Endothelial cell of umbilical vein (primary cell): ENCODE measurements at regions of chr6 and their contacts with region 1.

Region 1: DNA sequence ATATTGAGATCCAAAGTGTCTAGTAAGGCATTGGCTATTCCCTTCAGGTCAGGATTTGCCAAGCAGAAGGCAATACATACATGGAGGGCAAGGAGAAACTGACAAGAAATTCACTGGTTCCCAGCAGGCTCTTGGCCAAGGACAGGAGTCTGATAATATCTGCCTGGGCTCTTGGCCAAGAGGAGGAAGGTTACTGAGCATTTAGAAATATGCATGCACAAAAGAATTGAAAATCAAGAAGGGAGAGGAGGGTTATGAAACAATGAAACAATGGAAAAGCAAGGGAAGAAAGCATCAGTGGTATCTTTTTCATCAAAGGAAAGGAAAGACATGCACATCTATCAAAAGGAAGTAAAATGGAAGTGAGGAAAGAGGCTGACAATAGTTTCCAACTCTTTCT is 42.4 kb downstream of the ARHGAP18 start:
- DNase-seq: peak; percentile 92
- H3K4me3 ChIP-seq: no peak overlapping the region
- H3K27ac ChIP-seq: peak overlapping the region; percentile 35
- H3K4me1 ChIP-seq: peaks cover 62% of the 10 kb centered on the region
- H3K27me3 ChIP-seq: no peaks in the 10 kb centered on the region
- CTCF ChIP-seq: no peak
- POLR2A ChIP-seq: no peak

Region 2: DNA sequence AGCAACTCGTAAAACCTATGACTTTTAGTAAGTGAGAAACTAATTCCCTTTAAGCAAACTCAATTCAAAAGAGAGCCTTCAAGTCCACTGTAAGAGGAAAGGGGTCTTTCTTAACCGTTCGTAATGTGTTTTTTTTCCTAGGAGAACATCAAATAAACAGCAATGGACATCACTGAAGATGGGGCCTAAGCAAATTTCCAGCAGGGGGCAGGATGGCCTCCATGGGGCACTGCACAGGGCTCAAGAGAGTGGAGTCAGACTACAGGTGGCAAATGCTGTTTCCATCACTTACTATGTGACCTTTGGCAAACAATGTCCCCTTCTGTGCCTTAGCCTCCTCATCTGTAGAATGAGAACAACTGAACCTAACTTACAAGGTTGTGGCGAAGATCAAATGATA is 46.4 kb before region 1 on chr6:
- CTCF ChIA-PET with region 1: no interaction called
- POLR2A ChIA-PET with region 1: no interaction called
- dilution Hi-C with region 1: no loop called
- intact Hi-C with region 1: loop called (anchors 2 kb)
- DNase-seq: no peak
- H3K4me3 ChIP-seq: no peak overlapping the region
- H3K27ac ChIP-seq: no peak overlapping the region
- H3K4me1 ChIP-seq: peaks cover 27% of the 10 kb centered on the region
- H3K27me3 ChIP-seq: no peaks in the 10 kb centered on the region
- CTCF ChIP-seq: peak; percentile 27 to 28
- POLR2A ChIP-seq: no peak